ENCODE measurements at regions of chr3 and their contacts with region 1.

Region 1: DNA sequence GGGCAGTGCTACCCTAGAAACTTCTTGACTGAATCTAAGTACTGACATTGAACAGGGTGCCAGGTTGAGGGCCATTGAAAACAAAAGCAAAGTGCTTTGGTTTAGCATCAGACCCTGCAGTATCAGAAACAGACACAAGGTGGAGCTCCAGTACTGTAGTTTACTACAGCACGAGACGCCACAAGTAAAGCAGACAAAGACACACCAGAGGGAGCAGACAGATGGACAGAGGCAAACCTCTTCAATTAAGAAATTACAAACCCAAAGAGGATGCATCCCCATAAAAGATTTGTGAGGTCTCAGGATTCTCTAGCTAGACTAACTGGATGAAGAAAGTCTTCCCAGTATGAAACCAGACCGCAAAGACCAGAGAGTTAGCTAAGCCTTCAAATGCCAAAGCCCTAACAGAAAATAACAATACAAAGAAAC is 16.6 kb downstream of the TOP2B start:
- DNase-seq: peak; percentile 82
- ATAC-seq: peak; percentile 98
- H3K4me3 ChIP-seq: no peak overlapping the region
- H3K27ac ChIP-seq: no peak overlapping the region
- H3K4me1 ChIP-seq: peaks cover under 1% of the 10 kb centered on the region; the same call in 1 of the 2 replicates
- H3K27me3 ChIP-seq: no peaks in the 10 kb centered on the region
- CTCF ChIP-seq: peak; percentile 93
- POLR2A ChIP-seq: no peak
- RAD21 ChIP-seq: peak; percentile 94

Region 2: GRCh38 chr3:25483456-25483855 is 164.7 kb before region 1 on chr3:
- CTCF ChIA-PET with region 1: no interaction called
- POLR2A ChIA-PET with region 1: no interaction called
- dilution Hi-C with region 1: no loop called
- in situ Hi-C with region 1: no loop called
- intact Hi-C with region 1: no loop called
- DNase-seq: no peak
- ATAC-seq: no peak
- H3K4me3 ChIP-seq: no peak overlapping the region
- H3K27ac ChIP-seq: no peak overlapping the region
- H3K4me1 ChIP-seq: no peaks in the 10 kb centered on the region
- H3K27me3 ChIP-seq: no peaks in the 10 kb centered on the region
- CTCF ChIP-seq: no peak
- POLR2A ChIP-seq: no peak
- RAD21 ChIP-seq: no peak

Region 3: DNA sequence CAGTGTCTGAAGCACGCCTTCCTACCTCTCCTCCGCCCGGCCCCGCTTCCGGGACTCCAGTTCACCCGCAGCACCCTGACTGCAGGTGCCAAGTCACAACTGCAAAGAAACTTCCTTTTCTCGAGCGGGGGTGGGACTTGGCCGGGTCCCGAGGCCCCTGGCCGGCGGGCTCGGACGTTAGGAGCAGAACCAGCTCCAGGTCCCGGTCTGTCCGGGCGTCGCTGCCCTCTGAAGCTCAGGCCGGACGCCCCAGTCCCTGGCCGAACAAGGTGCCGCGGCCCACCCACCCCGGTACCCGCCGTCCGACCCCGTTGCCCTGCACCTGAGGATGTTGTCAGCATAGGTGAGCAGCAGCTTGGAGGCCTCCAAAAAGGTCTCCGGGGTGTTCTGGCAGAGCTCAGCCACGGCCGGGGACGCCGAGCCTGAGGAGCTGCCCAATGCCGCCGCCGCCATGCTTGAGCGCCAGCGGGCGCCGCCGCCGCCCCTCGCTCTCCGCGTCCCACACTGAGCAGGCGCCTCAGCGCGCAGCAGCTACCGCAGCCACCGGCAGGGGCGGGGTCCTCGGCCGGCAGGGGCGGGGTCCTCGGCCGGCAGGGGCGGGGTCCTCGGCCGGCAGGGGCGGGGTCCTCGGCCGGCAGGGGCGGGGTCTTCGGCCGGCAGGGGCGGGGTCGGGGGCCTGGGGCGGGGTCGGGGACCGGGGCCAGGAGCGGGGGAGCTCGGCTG is 135.0 kb after region 1 on chr3 and contains the start of gene NGLY1:
- CTCF ChIA-PET with region 1: no interaction called
- POLR2A ChIA-PET with region 1: no interaction called
- dilution Hi-C with region 1: no loop called
- in situ Hi-C with region 1: no loop called
- intact Hi-C with region 1: loop called (anchors 2 kb)
- DNase-seq: peak; percentile 75
- ATAC-seq: peak; percentile 97
- H3K4me3 ChIP-seq: peak within 1 kb of the TSS; percentile 89
- H3K27ac ChIP-seq: peak within 1 kb of the TSS; percentile 72
- H3K4me1 ChIP-seq: peaks cover 2% of the 10 kb centered on the region; the same call in 1 of the 2 replicates
- H3K27me3 ChIP-seq: no peaks in the 10 kb centered on the region
- CTCF ChIP-seq: no peak
- POLR2A ChIP-seq: peak; percentile 90
- RAD21 ChIP-seq: no peak
- total RNA-seq, gene NGLY1: 14.9 and 24.2 TPM in 2 replicates

Region 4: DNA sequence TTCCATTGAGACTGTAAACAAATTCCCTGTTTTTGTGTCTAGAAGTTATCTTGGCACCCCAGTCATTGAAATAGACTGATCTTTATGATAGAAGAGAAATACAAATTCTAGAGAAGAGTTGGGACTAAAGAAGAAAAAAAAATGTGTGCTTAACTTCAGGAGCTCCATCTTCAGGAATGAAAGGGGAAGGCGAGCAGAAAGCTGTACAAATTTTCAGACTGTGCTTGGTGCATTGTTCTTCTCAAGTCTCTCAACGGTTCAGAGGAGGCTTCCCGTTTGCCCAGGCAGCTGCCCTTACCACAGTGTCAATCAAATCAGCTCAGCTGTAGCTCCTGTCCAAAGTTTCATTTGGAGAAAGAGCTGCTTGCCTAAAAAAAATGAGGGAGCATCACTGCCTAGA is 183.5 kb after region 1 on chr3:
- CTCF ChIA-PET with region 1: interaction called, 10 read pairs
- POLR2A ChIA-PET with region 1: no interaction called
- dilution Hi-C with region 1: no loop called
- in situ Hi-C with region 1: no loop called
- intact Hi-C with region 1: loop called (anchors 1 kb)
- DNase-seq: peak; percentile 58
- ATAC-seq: peak; percentile 77
- H3K4me3 ChIP-seq: no peak overlapping the region
- H3K27ac ChIP-seq: no peak overlapping the region
- H3K4me1 ChIP-seq: no peaks in the 10 kb centered on the region
- H3K27me3 ChIP-seq: no peaks in the 10 kb centered on the region; the same call in 1 of the 2 replicates
- CTCF ChIP-seq: peak; percentile 50
- POLR2A ChIP-seq: no peak
- RAD21 ChIP-seq: peak; percentile 52

Region 5: GRCh38 chr3:25843332-25843731 is 195.2 kb after region 1 on chr3:
- CTCF ChIA-PET with region 1: no interaction called
- POLR2A ChIA-PET with region 1: no interaction called
- dilution Hi-C with region 1: no loop called
- in situ Hi-C with region 1: loop called (anchors 10 kb)
- intact Hi-C with region 1: no loop called
- DNase-seq: peak; percentile 25
- ATAC-seq: no peak
- H3K4me3 ChIP-seq: no peak overlapping the region
- H3K27ac ChIP-seq: no peak overlapping the region
- H3K4me1 ChIP-seq: no peaks in the 10 kb centered on the region
- H3K27me3 ChIP-seq: no peaks in the 10 kb centered on the region
- CTCF ChIP-seq: peak; percentile 47
- POLR2A ChIP-seq: no peak
- RAD21 ChIP-seq: peak; percentile 61

Region 6: DNA sequence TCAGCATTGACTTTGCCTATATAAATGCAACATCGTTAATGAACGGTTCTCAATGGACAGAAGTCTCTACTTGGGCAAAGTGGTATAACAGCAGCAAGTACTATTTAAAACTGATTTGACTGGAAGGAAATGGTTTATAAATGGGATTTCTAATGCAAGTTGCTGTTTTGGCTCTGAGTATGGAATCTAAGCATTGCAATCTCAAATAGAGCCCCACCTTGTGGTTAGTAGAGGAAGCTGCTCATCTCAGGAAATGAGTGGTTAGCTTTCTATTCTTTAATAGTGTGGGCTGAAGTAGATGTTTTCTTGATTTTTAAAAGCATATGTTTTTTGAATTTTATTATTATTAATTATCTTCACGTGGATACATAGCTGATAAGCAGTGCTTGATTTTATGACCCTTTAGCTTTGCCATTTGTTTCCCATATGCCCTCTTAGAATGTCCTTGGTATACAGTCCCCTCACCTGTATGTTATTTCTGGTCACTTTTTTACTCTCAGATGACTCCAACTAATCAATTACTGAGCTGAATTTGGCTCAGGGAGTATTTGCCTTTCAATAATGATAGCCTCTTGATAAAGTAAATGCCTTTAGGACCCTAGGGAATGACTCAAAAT is 208.9 kb after region 1 on chr3:
- CTCF ChIA-PET with region 1: interaction called, 14 read pairs
- POLR2A ChIA-PET with region 1: no interaction called
- dilution Hi-C with region 1: no loop called
- in situ Hi-C with region 1: no loop called
- intact Hi-C with region 1: loop called (anchors 1 kb)
- DNase-seq: peak; percentile 67
- ATAC-seq: peak; percentile 43; the same call in 1 of the 2 replicates
- H3K4me3 ChIP-seq: no peak overlapping the region
- H3K27ac ChIP-seq: no peak overlapping the region
- H3K4me1 ChIP-seq: peaks cover 5% of the 10 kb centered on the region
- H3K27me3 ChIP-seq: no peaks in the 10 kb centered on the region
- CTCF ChIP-seq: peak; percentile 79
- POLR2A ChIP-seq: no peak
- RAD21 ChIP-seq: peak; percentile 62

Measured in IMR-90 (cell line).